RWPE1 (cell line): ENCODE measurements at regions of chr9 and their contacts with region 1.

Region 1: GRCh38 chr9:34328987-34329832 is at the starts of genes KIF24 and NUDT2:
- DNase-seq: peak; percentile 99
- H3K27ac ChIP-seq: peak within 1 kb of the TSS; percentile 93
- CTCF ChIP-seq: no peak

Region 2: DNA sequence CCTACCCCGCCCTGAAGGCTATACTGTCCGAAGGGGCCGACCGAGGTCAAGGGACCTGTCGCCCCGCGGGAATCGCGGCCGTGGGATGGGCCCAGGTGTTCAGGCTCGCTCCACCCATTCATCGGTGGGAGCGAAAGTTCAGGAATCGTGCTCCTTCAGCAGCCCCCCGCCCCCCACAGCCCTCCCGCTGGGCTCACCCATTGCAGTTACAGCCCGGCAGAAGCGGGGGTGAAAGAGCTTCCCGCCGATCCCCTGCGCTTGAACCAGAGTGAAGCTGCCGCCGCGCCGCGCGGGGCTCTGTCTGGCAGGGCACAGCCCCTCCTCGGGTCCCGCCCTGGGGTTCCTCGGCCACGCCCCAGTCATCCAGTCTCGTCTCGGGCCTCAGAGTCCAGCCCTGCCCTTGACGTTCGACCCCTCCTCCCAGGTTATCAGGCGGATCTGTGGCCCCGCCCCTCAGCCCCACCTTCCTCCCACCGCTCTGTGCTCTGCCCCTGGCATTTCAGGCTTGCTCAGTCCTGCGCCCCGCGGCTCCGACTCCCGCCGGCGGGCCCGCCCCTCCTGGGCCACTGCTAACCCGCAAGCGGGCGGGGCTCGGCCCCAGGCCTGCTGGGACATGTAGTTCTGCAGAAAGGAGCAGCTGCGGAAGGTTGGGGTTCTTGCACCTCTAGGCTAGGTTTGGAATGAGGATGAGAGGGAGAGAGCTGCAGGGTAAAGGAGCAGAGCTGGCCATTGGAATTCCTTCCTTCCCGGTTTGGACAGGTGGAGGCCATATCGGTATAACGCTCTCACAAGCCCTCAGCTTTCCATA is 47.6 kb after region 1 on chr9 and contains the start of gene MYORG:
- CTCF ChIA-PET with region 1: interaction called, 54 read pairs
- POLR2A ChIA-PET with region 1: interaction called, 4 read pairs
- DNase-seq: peak; percentile 100
- H3K27ac ChIP-seq: peak within 1 kb of the TSS; percentile 77
- CTCF ChIP-seq: no peak

Region 3: GRCh38 chr9:34522971-34523797 is 194.0 kb after region 1 on chr9 and contains the start of gene ENHO:
- CTCF ChIA-PET with region 1: no interaction called
- POLR2A ChIA-PET with region 1: no interaction called
- DNase-seq: peak; percentile 96
- H3K27ac ChIP-seq: no peak within 1 kb of the TSS
- CTCF ChIP-seq: no peak